B cell (primary cell): ENCODE measurements at regions of chr17 and their contacts with region 1.

Region 1: GRCh38 chr17:45148183-45149036 is at the start of gene HEXIM1:
- DNase-seq: peak; percentile 100
- ATAC-seq: peak; percentile 74
- H3K4me3 ChIP-seq: peak within 1 kb of the TSS; percentile 69 to 99 (median 85)
- H3K4me3 Mint-ChIP-seq: peak within 1 kb of the TSS; percentile 91
- H3K27ac ChIP-seq: peak within 1 kb of the TSS; percentile 97 to 98
- H3K27ac Mint-ChIP-seq: peak within 1 kb of the TSS; percentile 99
- H3K4me1 ChIP-seq: peaks cover 38 to 66% of the 10 kb centered on the region in 2 donors
- H3K4me1 Mint-ChIP-seq: peaks cover 61% of the 10 kb centered on the region
- H3K27me3 ChIP-seq: no peaks in the 10 kb centered on the region
- H3K27me3 Mint-ChIP-seq: no peaks in the 10 kb centered on the region
- CTCF ChIP-seq: no peak
- total RNA-seq, gene HEXIM1: 48.9 and 49.6 TPM in 2 replicates

Region 2: GRCh38 chr17:44919885-44920564 is 228.4 kb before region 1 on chr17:
- CTCF ChIA-PET with region 1: interaction called, 6 read pairs
- POLR2A ChIA-PET with region 1: interaction called, 11 read pairs
- intact Hi-C with region 1: no loop called
- DNase-seq: peak; percentile 73
- ATAC-seq: peak; percentile 88
- H3K4me3 ChIP-seq: no peak overlapping the region
- H3K4me3 Mint-ChIP-seq: no peak overlapping the region
- H3K27ac ChIP-seq: no peak overlapping the region
- H3K27ac Mint-ChIP-seq: no peak overlapping the region
- H3K4me1 ChIP-seq: peaks cover 10 to 13% of the 10 kb centered on the region in 2 donors
- H3K4me1 Mint-ChIP-seq: peaks cover 12% of the 10 kb centered on the region
- H3K27me3 ChIP-seq: peaks cover 0 to 33% (median 6%) of the 10 kb centered on the region in 4 experiments
- H3K27me3 Mint-ChIP-seq: peaks cover 8% of the 10 kb centered on the region
- CTCF ChIP-seq: peak; percentile 61

Region 3: GRCh38 chr17:44968226-44969143 is 179.9 kb before region 1 on chr17 and contains the start of gene C1QL1:
- CTCF ChIA-PET with region 1: no interaction called
- POLR2A ChIA-PET with region 1: no interaction called
- intact Hi-C with region 1: no loop called
- DNase-seq: peak; percentile 89
- ATAC-seq: peak; percentile 98
- H3K4me3 ChIP-seq: peak within 1 kb of the TSS in 4 of 5 experiments; percentile 25 to 52 (median 48)
- H3K4me3 Mint-ChIP-seq: peak within 1 kb of the TSS; percentile 75
- H3K27ac ChIP-seq: no peak within 1 kb of the TSS
- H3K27ac Mint-ChIP-seq: no peak within 1 kb of the TSS
- H3K4me1 ChIP-seq: peaks cover 32 to 45% of the 10 kb centered on the region in 2 donors
- H3K4me1 Mint-ChIP-seq: peaks cover 40% of the 10 kb centered on the region
- H3K27me3 ChIP-seq: peaks cover 0 to 61% (median 35%) of the 10 kb centered on the region in 4 experiments
- H3K27me3 Mint-ChIP-seq: peaks cover 54% of the 10 kb centered on the region
- CTCF ChIP-seq: no peak
- total RNA-seq, gene C1QL1: not detected in 2 replicates

Region 4: DNA sequence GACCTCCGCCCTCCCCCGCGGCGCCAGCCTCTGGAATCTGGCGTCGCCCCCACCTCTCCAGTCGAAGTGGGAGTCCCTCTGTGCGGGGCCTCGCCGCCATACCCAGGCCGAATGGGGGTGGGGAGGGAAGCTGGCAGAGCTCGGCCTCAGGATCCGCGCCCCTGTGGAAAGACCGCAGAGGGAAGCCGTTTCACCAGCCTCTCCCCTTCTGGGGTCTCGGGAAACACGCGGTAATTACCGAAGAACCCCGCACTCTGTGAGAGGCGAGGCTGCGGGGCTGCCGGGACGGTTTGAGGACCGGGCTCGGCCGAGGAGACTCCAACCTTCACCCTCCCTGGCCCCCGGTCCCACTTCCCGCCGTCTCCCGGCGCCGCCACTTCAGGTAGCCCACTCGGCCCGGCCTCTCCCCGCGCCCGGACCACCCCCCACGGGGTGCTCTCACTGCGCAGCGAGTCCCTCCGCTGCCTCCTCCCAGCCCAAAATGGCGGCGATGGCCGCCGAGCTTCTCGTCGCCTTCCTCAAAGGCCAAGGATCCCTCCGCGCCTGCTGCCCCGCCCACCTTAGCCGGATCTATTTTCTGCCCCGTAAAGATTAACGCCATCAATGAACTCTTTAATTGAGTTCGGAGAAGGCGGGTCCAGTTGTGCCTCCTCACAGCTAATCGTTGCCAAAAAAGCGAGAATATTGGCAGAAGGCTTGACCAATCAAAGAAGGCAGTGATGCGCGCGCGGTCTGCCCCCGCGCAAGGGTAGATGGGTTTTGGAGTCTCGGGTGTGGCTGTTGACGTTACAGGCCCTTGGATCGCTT is 12.8 kb after region 1 on chr17:
- CTCF ChIA-PET with region 1: interaction called, 198 read pairs
- POLR2A ChIA-PET with region 1: interaction called, 246 read pairs
- intact Hi-C with region 1: loop called (anchors 1 kb)
- DNase-seq: peak; percentile 100
- ATAC-seq: peak; percentile 93
- H3K4me3 ChIP-seq: peak overlapping the region; percentile 64 to 98 (median 92)
- H3K4me3 Mint-ChIP-seq: peak overlapping the region; percentile 95
- H3K27ac ChIP-seq: peak overlapping the region; percentile 98
- H3K27ac Mint-ChIP-seq: peak overlapping the region; percentile 97
- H3K4me1 ChIP-seq: peaks cover 19 to 28% of the 10 kb centered on the region in 2 donors
- H3K4me1 Mint-ChIP-seq: peaks cover 37% of the 10 kb centered on the region
- H3K27me3 ChIP-seq: no peaks in the 10 kb centered on the region
- H3K27me3 Mint-ChIP-seq: no peaks in the 10 kb centered on the region
- CTCF ChIP-seq: no peak

Region 5: DNA sequence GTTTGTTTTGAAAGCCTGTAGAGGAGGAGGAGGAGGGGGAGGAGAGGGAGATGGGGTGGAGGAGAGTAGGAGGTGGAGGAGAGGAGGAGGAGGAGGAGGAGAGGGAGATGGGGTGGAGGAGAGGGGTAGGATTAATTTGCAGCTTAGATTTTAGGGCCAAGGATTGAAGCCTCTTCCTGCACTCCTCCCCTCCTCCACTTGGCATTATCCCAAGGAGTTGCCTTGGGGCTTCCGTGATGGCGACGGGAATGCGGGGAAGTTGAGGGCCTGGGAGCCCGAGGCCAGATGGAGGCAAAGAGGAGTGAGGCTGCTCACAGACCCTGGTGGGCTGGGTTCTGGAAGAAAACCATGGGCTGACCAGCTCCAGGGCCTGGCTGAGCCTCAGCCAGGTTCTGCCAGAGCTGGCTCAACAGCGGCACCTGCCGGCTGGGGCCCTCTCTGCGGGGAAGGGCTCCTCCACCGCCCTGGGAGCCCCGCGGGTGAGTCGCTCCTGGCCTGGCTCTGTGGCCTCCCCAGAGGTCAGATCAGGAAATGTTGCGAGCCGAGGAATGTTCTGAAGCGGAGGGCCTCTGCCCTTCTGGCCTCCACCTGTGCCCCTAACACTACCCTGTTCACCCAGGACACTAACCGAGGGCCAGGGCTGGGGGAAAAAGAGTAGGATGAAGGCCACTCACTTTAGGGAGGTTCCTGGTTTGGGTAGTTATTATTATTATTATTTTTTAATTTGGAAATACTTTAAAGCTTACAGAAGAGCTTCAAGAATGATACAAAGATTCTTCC is 49.3 kb after region 1 on chr17:
- CTCF ChIA-PET with region 1: interaction called, 167 read pairs
- POLR2A ChIA-PET with region 1: interaction called, 9 read pairs
- intact Hi-C with region 1: loop called (anchors 1 kb)
- DNase-seq: peak; percentile 87
- ATAC-seq: peak; percentile 100
- H3K4me3 ChIP-seq: no peak overlapping the region
- H3K4me3 Mint-ChIP-seq: no peak overlapping the region
- H3K27ac ChIP-seq: no peak overlapping the region
- H3K27ac Mint-ChIP-seq: peak overlapping the region; percentile 15
- H3K4me1 ChIP-seq: peaks cover 0 to 6% of the 10 kb centered on the region in 2 donors
- H3K4me1 Mint-ChIP-seq: peaks cover 9% of the 10 kb centered on the region
- H3K27me3 ChIP-seq: no peaks in the 10 kb centered on the region
- H3K27me3 Mint-ChIP-seq: no peaks in the 10 kb centered on the region
- CTCF ChIP-seq: peak; percentile 97

Region 6: DNA sequence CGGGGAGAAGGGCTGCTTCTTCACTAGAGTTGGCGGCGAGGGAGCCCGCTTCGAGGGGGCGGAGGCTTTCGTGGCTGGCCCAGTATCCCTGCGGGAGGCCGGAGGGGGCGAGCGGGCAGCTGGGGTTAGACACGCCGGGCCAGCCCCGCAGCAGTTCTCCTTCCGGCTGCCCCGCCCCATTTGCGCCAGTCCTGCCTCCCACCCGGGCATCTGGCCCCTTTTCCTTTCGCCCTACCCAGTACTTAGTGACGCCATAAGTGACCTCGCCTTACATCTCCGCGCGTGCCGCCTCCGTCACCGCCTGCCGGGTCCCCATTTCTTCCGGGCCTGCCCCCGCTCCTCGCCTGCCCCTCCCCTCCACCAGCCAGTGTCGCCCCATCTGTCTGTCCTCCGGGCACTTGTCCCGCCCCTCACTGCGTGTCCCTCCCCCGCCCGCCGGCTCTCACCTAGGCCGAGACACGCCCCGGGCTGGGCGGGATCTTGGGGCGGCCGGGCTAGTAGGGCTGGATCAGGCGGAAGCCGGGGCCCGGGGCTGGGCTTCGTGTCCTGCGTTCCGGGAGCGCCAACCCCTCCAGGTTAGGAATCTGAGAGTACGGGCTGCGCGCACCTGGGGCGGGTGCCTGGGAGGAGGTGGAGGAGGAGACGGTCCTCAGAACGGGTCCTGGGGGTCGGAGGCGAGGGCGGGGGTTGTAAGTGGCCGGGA is 99.2 kb after region 1 on chr17:
- CTCF ChIA-PET with region 1: interaction called, 3 read pairs
- POLR2A ChIA-PET with region 1: interaction called, 10 read pairs
- intact Hi-C with region 1: loop called (anchors 1 kb)
- DNase-seq: peak; percentile 97
- ATAC-seq: peak; percentile 88
- H3K4me3 ChIP-seq: peak overlapping the region; percentile 2 to 81 (median 78)
- H3K4me3 Mint-ChIP-seq: peak overlapping the region; percentile 92
- H3K27ac ChIP-seq: peak overlapping the region; percentile 82 to 92
- H3K27ac Mint-ChIP-seq: peak overlapping the region; percentile 96
- H3K4me1 ChIP-seq: peaks cover 20 to 22% of the 10 kb centered on the region in 2 donors
- H3K4me1 Mint-ChIP-seq: peaks cover 34% of the 10 kb centered on the region
- H3K27me3 ChIP-seq: no peaks in the 10 kb centered on the region
- H3K27me3 Mint-ChIP-seq: no peaks in the 10 kb centered on the region
- CTCF ChIP-seq: no peak

Region 7: GRCh38 chr17:45388604-45389325 is 240.4 kb after region 1 on chr17:
- CTCF ChIA-PET with region 1: no interaction called
- POLR2A ChIA-PET with region 1: no interaction called
- intact Hi-C with region 1: no loop called
- DNase-seq: no peak
- ATAC-seq: no peak
- H3K4me3 ChIP-seq: no peak overlapping the region
- H3K4me3 Mint-ChIP-seq: no peak overlapping the region
- H3K27ac ChIP-seq: no peak overlapping the region
- H3K27ac Mint-ChIP-seq: no peak overlapping the region
- H3K4me1 ChIP-seq: peaks cover 0 to 7% of the 10 kb centered on the region in 2 donors
- H3K4me1 Mint-ChIP-seq: peaks cover 14% of the 10 kb centered on the region
- H3K27me3 ChIP-seq: peaks cover 0 to 12% (median 2%) of the 10 kb centered on the region in 4 experiments
- H3K27me3 Mint-ChIP-seq: peaks cover 16% of the 10 kb centered on the region
- CTCF ChIP-seq: no peak